Dendritic cell treated with granulocyte-macrophage colony-stimulating factor and Interleukin-4, amounts not matched to agents 40 ng/mL and 50 ng/mL, for 4 days (primary cell): ENCODE measurements at regions of chr11 and their contacts with region 1.

Region 1: DNA sequence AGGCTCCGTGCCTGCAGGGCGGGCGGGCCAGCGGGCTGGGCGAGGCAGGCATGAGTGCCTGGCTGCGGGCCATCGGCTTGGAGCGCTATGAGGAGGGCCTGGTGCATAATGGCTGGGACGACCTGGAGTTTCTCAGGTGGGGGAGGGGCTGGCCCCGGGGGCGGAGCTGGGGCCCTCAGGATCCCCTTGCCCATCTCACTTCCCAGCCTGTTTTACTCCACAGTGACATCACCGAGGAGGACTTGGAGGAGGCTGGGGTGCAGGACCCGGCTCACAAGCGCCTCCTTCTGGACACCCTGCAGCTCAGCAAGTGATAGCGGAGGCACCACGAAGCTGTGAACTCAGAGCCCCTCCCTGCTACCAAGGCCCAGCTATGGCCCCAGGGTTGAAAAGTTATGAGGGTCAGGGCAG is 5.9 kb downstream of the PHOX2A start:
- H3K4me3 Mint-ChIP-seq: no peak overlapping the region
- H3K27ac Mint-ChIP-seq: no peak overlapping the region
- H3K4me1 Mint-ChIP-seq: peaks cover 82% of the 10 kb centered on the region
- H3K27me3 Mint-ChIP-seq: peaks cover 51% of the 10 kb centered on the region

Region 2: DNA sequence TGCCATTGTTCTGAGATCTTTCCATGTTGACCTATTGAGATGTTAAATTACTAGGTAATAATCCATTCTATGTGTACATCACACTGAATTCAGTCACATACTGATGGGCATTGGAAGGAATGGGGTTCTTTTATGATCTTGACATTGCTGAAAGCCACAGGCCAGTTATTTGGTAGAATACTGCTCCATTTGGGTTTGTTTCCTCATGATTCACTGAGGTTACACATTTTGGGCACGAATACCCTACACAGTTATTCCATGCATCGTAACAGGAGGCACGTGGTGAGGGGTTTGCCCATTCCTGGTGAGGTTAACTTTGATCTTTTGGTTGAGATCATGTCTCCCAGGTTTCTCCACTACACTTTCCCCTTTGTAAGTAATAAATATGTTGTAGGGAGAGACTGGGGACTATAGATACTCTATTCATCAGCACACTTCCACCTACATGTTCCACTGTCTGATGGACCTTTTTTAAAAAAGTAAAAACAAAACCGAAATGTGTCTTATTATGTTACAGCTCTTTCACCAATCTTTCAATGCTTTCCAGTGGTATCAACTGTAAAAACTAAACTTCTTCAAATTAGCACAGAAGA is 58.1 kb before region 1 on chr11:
- intact Hi-C with region 1: loop called (anchors 5 kb)
- H3K4me3 Mint-ChIP-seq: no peak overlapping the region
- H3K27ac Mint-ChIP-seq: no peak overlapping the region
- H3K4me1 Mint-ChIP-seq: peaks cover 12% of the 10 kb centered on the region
- H3K27me3 Mint-ChIP-seq: peaks cover 11% of the 10 kb centered on the region

Region 3: GRCh38 chr11:72203163-72203562 is 34.9 kb before region 1 on chr11:
- intact Hi-C with region 1: no loop called
- H3K4me3 Mint-ChIP-seq: no peak overlapping the region
- H3K27ac Mint-ChIP-seq: peak overlapping the region; percentile 9
- H3K4me1 Mint-ChIP-seq: peaks cover 43% of the 10 kb centered on the region
- H3K27me3 Mint-ChIP-seq: no peaks in the 10 kb centered on the region

Region 4: DNA sequence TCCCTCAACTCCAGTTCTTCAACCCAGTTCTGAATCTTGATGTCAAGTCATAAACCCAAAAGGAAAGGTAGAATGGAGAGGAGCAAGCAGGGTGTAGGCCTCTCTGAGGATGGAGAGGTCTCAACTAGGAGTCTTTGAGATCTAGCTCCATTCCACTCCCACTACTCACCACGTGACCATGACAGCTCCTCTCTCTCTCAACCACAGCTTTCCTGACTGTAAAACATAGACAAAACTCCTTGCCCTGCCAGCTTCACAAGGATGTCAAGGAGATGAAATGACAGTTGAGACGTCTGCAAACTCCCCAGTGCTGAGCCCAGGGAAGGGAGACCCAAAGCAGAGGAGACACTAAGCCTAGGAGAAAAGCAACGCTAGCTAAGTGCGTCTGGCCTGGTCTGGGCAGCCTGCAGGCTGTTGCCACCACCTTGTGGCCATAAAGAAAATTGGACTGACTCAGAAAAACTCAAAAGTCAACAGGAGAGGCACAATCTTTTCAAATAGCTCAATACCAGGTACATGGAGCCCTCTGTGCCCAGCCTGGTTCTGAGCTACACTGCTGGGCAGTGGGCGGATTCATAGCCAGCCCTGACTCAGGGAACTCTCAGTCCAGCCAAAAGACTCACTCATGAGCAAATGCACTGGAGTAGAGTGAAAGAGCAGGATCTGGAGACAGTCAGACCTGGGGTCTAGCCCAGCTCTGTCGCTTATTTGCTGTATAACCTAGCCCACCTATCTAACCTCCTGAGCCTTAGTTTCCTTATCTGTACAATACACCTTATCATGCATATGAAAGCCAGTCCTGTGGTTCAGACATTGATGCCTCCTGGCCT is 192.9 kb after region 1 on chr11:
- intact Hi-C with region 1: loop called (anchors 5 kb)
- H3K4me3 Mint-ChIP-seq: peak overlapping the region; percentile 64
- H3K27ac Mint-ChIP-seq: peak overlapping the region; percentile 77
- H3K4me1 Mint-ChIP-seq: peaks cover 59% of the 10 kb centered on the region
- H3K27me3 Mint-ChIP-seq: no peaks in the 10 kb centered on the region